B cell (primary cell): ENCODE measurements at regions of chr4 and their contacts with region 1.

Region 1: GRCh38 chr4:25862411-25863346 is at the start of gene SEL1L3:
- DNase-seq: peak; percentile 78
- ATAC-seq: peak; percentile 53
- H3K4me3 ChIP-seq: peak within 1 kb of the TSS; percentile 71 to 90 (median 82)
- H3K4me3 Mint-ChIP-seq: peak within 1 kb of the TSS; percentile 93
- H3K27ac ChIP-seq: peak within 1 kb of the TSS; percentile 86 to 88
- H3K27ac Mint-ChIP-seq: peak within 1 kb of the TSS; percentile 95
- H3K4me1 ChIP-seq: peaks cover 78 to 79% of the 10 kb centered on the region in 2 donors
- H3K4me1 Mint-ChIP-seq: peaks cover 78% of the 10 kb centered on the region
- H3K27me3 ChIP-seq: no peaks in the 10 kb centered on the region
- H3K27me3 Mint-ChIP-seq: no peaks in the 10 kb centered on the region
- CTCF ChIP-seq: no peak
- total RNA-seq, gene SEL1L3: 280 and 291 TPM in 2 replicates

Region 2: DNA sequence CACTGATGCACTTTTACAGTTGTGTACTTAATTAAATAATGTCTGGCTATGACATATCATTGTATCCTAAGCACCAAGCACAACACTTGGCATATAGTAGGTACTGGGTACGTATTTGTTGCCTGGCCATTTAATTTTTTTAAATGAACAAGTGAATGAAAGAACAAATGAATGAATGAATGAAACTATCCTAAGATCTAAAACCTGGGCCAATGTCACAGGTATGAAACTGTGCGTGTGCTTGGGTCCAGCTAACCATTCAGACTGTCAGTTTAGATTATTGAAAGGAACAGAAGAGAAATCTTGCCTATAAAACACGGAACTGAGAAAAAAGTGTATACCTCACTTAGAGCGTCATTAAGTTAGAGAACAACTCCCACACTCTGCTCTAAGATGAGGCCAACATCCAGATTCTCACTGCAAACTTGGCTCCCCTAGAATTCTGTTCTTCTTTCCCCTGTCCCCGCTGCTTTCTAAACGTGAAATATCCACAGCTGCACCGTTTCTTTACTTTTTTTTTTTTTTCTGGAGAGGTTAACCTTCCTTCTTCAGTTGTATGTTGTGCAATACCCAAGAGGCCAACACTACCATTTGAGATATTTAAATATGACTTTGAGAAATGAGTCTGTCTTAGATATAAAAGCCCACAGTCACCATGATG is 17.4 kb after region 1 on chr4:
- CTCF ChIA-PET with region 1: interaction called, 5 read pairs
- POLR2A ChIA-PET with region 1: interaction called, 11 read pairs
- intact Hi-C with region 1: loop called (anchors 1 kb)
- DNase-seq: peak; percentile 68
- ATAC-seq: peak; percentile 48
- H3K4me3 ChIP-seq: no peak overlapping the region
- H3K4me3 Mint-ChIP-seq: peak overlapping the region; percentile 82
- H3K27ac ChIP-seq: peak overlapping the region; percentile 70 to 71
- H3K27ac Mint-ChIP-seq: peak overlapping the region; percentile 97
- H3K4me1 ChIP-seq: peaks cover 70 to 76% of the 10 kb centered on the region in 2 donors
- H3K4me1 Mint-ChIP-seq: peaks cover 80% of the 10 kb centered on the region
- H3K27me3 ChIP-seq: no peaks in the 10 kb centered on the region
- H3K27me3 Mint-ChIP-seq: no peaks in the 10 kb centered on the region
- CTCF ChIP-seq: no peak

Region 3: DNA sequence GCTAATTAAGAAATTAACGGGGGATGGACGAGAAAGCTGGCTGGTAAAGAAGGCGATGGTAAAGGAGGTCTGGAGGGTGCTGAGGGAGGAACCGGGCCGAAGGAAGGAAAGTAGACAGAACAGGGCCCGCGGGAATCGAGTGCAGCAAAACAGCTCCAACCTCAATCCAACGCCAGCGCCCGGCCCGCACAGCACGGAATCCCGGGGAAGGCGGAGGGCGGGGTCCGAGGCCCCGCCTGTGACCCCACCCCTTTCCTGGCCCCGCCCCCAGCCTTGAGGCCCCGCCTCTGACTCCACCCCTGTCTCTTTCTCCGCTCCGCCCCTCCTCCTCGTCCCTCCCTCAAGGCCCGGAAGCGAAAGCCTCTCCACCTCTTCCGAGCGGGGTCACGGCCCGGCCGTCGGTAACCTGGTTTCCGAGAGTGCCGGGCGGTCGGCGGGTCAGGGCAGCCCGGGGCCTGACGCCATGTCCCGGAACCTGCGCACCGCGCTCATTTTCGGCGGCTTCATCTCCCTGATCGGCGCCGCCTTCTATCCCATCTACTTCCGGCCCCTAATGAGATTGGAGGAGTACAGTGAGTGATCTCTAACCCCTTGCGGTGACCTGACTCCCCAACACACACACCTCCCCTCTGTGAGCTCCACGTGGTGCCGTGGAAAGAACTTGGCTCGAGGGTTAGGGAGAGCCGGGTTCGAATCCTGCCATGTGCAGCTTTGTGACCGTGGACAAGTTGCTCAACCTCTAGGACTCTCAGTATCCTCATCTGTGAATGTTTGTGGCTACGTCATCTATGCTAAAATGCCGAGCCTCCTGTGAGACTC is 51.4 kb after region 1 on chr4 and contains the start of gene SMIM20:
- CTCF ChIA-PET with region 1: interaction called, 22 read pairs
- POLR2A ChIA-PET with region 1: interaction called, 22 read pairs
- intact Hi-C with region 1: loop called (anchors 1 kb)
- DNase-seq: peak; percentile 95
- ATAC-seq: peak; percentile 94
- H3K4me3 ChIP-seq: peak within 1 kb of the TSS; percentile 89 to 95 (median 93)
- H3K4me3 Mint-ChIP-seq: peak within 1 kb of the TSS; percentile 95
- H3K27ac ChIP-seq: peak within 1 kb of the TSS; percentile 92 to 93
- H3K27ac Mint-ChIP-seq: peak within 1 kb of the TSS; percentile 97
- H3K4me1 ChIP-seq: peaks cover 27 to 35% of the 10 kb centered on the region in 2 donors
- H3K4me1 Mint-ChIP-seq: peaks cover 34% of the 10 kb centered on the region
- H3K27me3 ChIP-seq: no peaks in the 10 kb centered on the region
- H3K27me3 Mint-ChIP-seq: no peaks in the 10 kb centered on the region
- CTCF ChIP-seq: no peak
- total RNA-seq, gene SMIM20: 14.3 and 20.2 TPM in 2 replicates

Region 4: DNA sequence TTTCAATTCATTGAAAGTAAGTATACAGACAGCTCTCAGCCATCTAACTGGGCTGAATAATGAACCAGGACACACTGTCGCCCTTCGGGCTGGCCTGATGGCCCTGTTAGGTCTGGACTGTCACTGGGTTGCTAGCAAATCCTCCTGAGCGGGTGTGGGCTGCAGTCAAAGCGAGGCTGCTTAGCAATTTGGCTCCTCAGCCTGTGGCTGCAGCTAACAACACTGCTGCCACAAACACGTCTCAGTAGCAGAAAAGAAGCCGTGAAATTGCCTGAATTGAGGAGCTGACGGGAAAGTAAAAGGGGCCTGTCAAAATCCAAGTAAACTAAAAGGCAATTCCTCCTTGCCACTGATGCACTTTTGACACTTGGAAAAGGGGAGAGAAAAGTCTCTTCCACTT is 124.1 kb after region 1 on chr4:
- CTCF ChIA-PET with region 1: interaction called, 29 read pairs
- POLR2A ChIA-PET with region 1: no interaction called
- intact Hi-C with region 1: loop called (anchors 5 kb)
- DNase-seq: no peak
- ATAC-seq: no peak
- H3K4me3 ChIP-seq: no peak overlapping the region
- H3K4me3 Mint-ChIP-seq: no peak overlapping the region
- H3K27ac ChIP-seq: no peak overlapping the region
- H3K27ac Mint-ChIP-seq: no peak overlapping the region
- H3K4me1 ChIP-seq: peaks cover 5 to 21% of the 10 kb centered on the region in 2 donors
- H3K4me1 Mint-ChIP-seq: peaks cover 20% of the 10 kb centered on the region
- H3K27me3 ChIP-seq: peaks cover 0 to 6% (median 0%) of the 10 kb centered on the region in 4 experiments
- H3K27me3 Mint-ChIP-seq: peaks cover 5% of the 10 kb centered on the region
- CTCF ChIP-seq: no peak

Region 5: GRCh38 chr4:26319467-26319948 is 456.8 kb after region 1 on chr4:
- CTCF ChIA-PET with region 1: no interaction called
- POLR2A ChIA-PET with region 1: interaction called, 3 read pairs
- intact Hi-C with region 1: loop called (anchors 5 kb)
- DNase-seq: peak; percentile 97
- ATAC-seq: peak; percentile 73
- H3K4me3 ChIP-seq: peak overlapping the region; percentile 75 to 91 (median 87)
- H3K4me3 Mint-ChIP-seq: peak overlapping the region; percentile 99
- H3K27ac ChIP-seq: peak overlapping the region; percentile 78 to 89
- H3K27ac Mint-ChIP-seq: peak overlapping the region; percentile 99
- H3K4me1 ChIP-seq: peaks cover 13 to 22% of the 10 kb centered on the region in 2 donors
- H3K4me1 Mint-ChIP-seq: peaks cover 27% of the 10 kb centered on the region
- H3K27me3 ChIP-seq: no peaks in the 10 kb centered on the region
- H3K27me3 Mint-ChIP-seq: no peaks in the 10 kb centered on the region
- CTCF ChIP-seq: no peak

Region 6: GRCh38 chr4:26583865-26584652 is 721.4 kb after region 1 on chr4 and contains the start of gene TBC1D19:
- CTCF ChIA-PET with region 1: no interaction called
- POLR2A ChIA-PET with region 1: no interaction called
- intact Hi-C with region 1: loop called (anchors 10 kb)
- DNase-seq: peak; percentile 90
- ATAC-seq: peak; percentile 95
- H3K4me3 ChIP-seq: peak within 1 kb of the TSS; percentile 43 to 92 (median 82)
- H3K4me3 Mint-ChIP-seq: peak within 1 kb of the TSS; percentile 88
- H3K27ac ChIP-seq: peak within 1 kb of the TSS; percentile 85 to 87
- H3K27ac Mint-ChIP-seq: peak within 1 kb of the TSS; percentile 91
- H3K4me1 ChIP-seq: peaks cover 11 to 13% of the 10 kb centered on the region in 2 donors
- H3K4me1 Mint-ChIP-seq: peaks cover 26% of the 10 kb centered on the region
- H3K27me3 ChIP-seq: no peaks in the 10 kb centered on the region
- H3K27me3 Mint-ChIP-seq: peaks cover 7% of the 10 kb centered on the region
- CTCF ChIP-seq: no peak
- total RNA-seq, gene TBC1D19: 10.0 and 11.0 TPM in 2 replicates

Region 7: GRCh38 chr4:26885912-26886274 is 1023.2 kb after region 1 on chr4:
- CTCF ChIA-PET with region 1: no interaction called
- POLR2A ChIA-PET with region 1: no interaction called
- intact Hi-C with region 1: loop called (anchors 10 kb)
- DNase-seq: peak; percentile 87
- ATAC-seq: peak; percentile 74
- H3K4me3 ChIP-seq: peak overlapping the region in 4 of 5 experiments; percentile 25 to 61 (median 42)
- H3K4me3 Mint-ChIP-seq: peak overlapping the region; percentile 78
- H3K27ac ChIP-seq: peak overlapping the region; percentile 95 to 98
- H3K27ac Mint-ChIP-seq: peak overlapping the region; percentile 86
- H3K4me1 ChIP-seq: peaks cover 70 to 71% of the 10 kb centered on the region in 2 donors
- H3K4me1 Mint-ChIP-seq: peaks cover 83% of the 10 kb centered on the region
- H3K27me3 ChIP-seq: no peaks in the 10 kb centered on the region
- H3K27me3 Mint-ChIP-seq: no peaks in the 10 kb centered on the region
- CTCF ChIP-seq: no peak